Ovary (tissue), 10 donors: ENCODE measurements at regions of chr9 and their contacts with region 1.

Region 1: GRCh38 chr9:135009711-135010584 is 77.5 kb upstream of the OLFM1 start:
- DNase-seq: no peak
- H3K4me3 ChIP-seq: no peak overlapping the region
- H3K27ac ChIP-seq: no peak overlapping the region
- H3K4me1 ChIP-seq: no peaks in the 10 kb centered on the region
- H3K27me3 ChIP-seq: no peaks in the 10 kb centered on the region
- CTCF ChIP-seq: no peak
- EP300 ChIP-seq: no peak
- POLR2A ChIP-seq: no peak

Region 2: DNA sequence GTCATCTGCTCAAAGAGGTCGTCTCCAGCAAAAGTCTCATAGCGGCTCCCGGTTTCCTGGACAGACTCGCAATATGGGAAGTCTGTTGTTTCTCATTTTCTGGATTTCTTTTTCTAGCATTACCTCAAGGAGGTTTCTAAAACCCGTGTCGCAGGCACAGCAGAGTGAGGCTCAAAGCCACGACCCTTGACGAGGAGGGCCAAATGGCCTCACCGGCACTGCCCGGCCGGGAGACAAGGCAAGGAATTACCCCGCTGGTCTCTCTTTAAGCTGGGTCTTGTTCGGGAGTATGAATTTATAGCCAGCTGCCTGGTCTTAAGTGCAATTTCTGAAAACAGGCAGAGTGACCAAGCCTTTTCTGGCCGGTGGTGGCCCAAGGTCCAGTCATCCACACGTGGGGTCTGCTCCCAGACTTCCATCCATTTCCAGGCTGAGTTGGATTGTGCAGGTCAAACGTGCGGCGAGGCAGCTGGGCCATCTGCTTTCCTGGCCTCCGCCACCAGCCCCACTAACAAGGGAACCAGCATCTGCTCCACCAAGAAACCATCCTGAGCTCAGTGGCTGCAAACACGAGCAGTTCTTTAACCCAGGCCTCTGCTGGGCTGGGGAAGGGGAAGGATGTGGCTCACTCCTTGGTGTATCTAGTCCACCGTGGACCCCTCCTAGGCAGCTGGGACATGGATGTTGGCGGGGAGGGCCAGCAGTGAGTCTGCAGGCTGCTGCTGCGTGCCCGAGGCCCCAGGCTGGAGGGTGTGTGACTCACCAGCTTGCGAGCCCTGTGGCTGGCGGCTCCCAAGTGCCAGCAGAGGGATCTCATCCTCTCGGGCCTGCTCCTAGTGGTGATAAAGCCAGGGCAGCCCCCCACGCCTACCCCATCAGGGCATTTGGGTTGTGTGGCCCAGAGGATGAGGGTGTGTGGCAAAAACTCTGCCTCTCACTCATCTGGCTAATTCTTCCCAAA is 423.9 kb before region 1 on chr9:
- intact Hi-C with region 1: no loop called
- DNase-seq: peak in 1 of 5 donors; percentile 14
- H3K4me3 ChIP-seq: no peak overlapping the region
- H3K27ac ChIP-seq: no peak overlapping the region
- H3K4me1 ChIP-seq: no peaks in the 10 kb centered on the region
- H3K27me3 ChIP-seq: no peaks in the 10 kb centered on the region
- CTCF ChIP-seq: no peak
- EP300 ChIP-seq: no peak
- POLR2A ChIP-seq: no peak

Region 3: GRCh38 chr9:135077497-135078200 is 67.7 kb after region 1 on chr9:
- intact Hi-C with region 1: loop called in 1 of 4 experiments (anchors 10 kb)
- DNase-seq: peak in 2 of 5 donors; percentile 55 to 67
- H3K4me3 ChIP-seq: no peak overlapping the region
- H3K27ac ChIP-seq: no peak overlapping the region
- H3K4me1 ChIP-seq: no peaks in the 10 kb centered on the region
- H3K27me3 ChIP-seq: no peaks in the 10 kb centered on the region
- CTCF ChIP-seq: no peak
- EP300 ChIP-seq: no peak
- POLR2A ChIP-seq: no peak

Region 4: DNA sequence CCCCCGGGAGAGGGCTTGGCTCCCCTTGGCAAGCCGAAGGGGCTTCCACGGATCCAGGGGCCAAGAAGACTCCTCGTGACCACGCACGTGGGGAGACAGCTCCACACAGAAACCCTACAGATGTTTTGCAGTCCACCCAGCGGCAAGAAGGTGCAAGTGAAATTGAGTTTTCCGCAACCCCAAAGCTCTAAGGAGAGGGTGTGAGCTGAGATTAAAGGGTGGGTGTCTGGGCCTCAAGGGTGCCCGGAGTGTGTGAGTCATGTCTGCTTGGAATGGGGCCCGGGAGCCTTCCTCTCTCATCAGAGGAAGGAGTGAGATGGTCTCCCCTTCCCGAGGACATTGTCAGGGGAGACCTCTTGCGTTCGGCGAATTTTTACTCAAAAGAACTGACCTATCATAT is 156.6 kb after region 1 on chr9:
- intact Hi-C with region 1: no loop called
- DNase-seq: no peak
- H3K4me3 ChIP-seq: no peak overlapping the region
- H3K27ac ChIP-seq: no peak overlapping the region
- H3K4me1 ChIP-seq: no peaks in the 10 kb centered on the region
- H3K27me3 ChIP-seq: no peaks in the 10 kb centered on the region
- CTCF ChIP-seq: no peak
- EP300 ChIP-seq: no peak
- POLR2A ChIP-seq: no peak